ENCODE measurements at regions of chr3 and their contacts with region 1.

Region 1: GRCh38 chr3:30658328-30659052 is 52.1 kb downstream of the TGFBR2 start:
- DNase-seq: no peak
- ATAC-seq: peak; percentile 58
- H3K4me3 Mint-ChIP-seq: peak overlapping the region; percentile 82
- H3K27ac Mint-ChIP-seq: peak overlapping the region; percentile 96
- H3K4me1 Mint-ChIP-seq: peaks cover 83% of the 10 kb centered on the region
- H3K27me3 Mint-ChIP-seq: no peaks in the 10 kb centered on the region

Region 2: GRCh38 chr3:30681643-30682211 is 23.2 kb after region 1 on chr3:
- POLR2A ChIA-PET with region 1: interaction called, 10 read pairs
- DNase-seq: no peak
- ATAC-seq: peak; percentile 44
- H3K4me3 Mint-ChIP-seq: peak overlapping the region; percentile 71
- H3K27ac Mint-ChIP-seq: peak overlapping the region; percentile 80
- H3K4me1 Mint-ChIP-seq: peaks cover 73% of the 10 kb centered on the region
- H3K27me3 Mint-ChIP-seq: no peaks in the 10 kb centered on the region

Region 3: GRCh38 chr3:30786365-30786764 is 127.9 kb after region 1 on chr3:
- POLR2A ChIA-PET with region 1: no interaction called
- DNase-seq: no peak
- ATAC-seq: no peak
- H3K4me3 Mint-ChIP-seq: no peak overlapping the region
- H3K27ac Mint-ChIP-seq: no peak overlapping the region
- H3K4me1 Mint-ChIP-seq: no peaks in the 10 kb centered on the region
- H3K27me3 Mint-ChIP-seq: peaks cover 5% of the 10 kb centered on the region

Measured in activated naive CD8-positive, alpha-beta T cell treated with anti-CD3 and anti-CD28 coated beads, Interleukin-2, amount 10 ng/mL, durations not matched to agents 7 days and 5 days (primary cell).